Naive thymus-derived CD4-positive, alpha-beta T cell (primary cell): ENCODE measurements at regions of chr15 and their contacts with region 1.

Region 1: DNA sequence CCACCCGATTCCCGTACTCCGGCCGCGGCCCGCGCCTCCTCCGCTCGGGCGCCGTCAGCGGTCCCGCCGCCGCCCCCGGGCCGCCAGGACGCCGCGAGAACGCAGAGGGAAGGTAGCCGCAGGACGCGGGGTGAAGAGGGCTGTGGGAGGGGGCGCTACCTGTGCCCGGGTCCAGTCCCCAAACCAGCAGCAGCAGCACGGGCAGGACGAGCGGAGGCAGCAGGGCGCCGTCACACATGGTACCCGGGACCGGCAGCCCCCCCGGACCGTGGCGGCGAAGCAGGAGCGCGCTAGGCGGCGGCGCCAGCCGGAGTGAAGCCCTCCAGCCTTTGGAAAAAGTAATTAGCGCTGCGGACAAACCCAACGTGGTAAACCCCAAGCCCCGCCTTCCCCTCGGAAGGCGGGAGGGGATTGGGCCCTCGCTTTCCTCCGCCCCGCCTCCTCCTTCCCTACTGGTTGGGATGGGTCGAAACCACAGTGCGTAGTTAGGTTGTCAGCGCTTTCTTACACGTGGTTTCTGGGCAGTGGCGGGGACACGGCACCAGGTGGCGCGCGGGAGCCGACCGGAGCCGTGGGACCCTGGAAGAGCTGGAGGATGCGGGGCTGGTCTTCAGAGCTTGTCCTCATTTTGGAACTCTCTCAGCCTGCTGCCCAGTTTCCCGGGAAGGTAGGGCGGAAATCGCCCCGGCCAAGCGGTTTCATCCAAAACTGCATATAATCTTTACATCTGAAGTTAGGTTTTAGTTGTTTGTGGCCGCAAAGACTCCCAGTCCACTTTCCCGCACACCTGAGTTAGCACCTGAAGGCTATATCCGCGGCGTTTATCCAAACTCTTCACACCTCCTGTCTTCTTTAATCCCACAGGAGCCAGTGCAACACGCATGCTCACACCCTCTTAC is at the start of gene ADAMTS17:
- DNase-seq: peak; percentile 80 to 96 (median 94)
- ATAC-seq: peak; percentile 98
- H3K4me3 ChIP-seq: peak within 1 kb of the TSS; percentile 69
- H3K4me3 Mint-ChIP-seq: peak within 1 kb of the TSS; percentile 59 to 88 (median 76)
- H3K27ac ChIP-seq: peak within 1 kb of the TSS; percentile 76
- H3K27ac Mint-ChIP-seq: peak within 1 kb of the TSS in 6 of 9 donors; percentile 6 to 76 (median 29)
- H3K4me1 ChIP-seq: peaks cover 4 to 6% of the 10 kb centered on the region in 2 donors
- H3K4me1 Mint-ChIP-seq: peaks cover 7 to 36% (median 28%) of the 10 kb centered on the region in 7 donors
- H3K27me3 ChIP-seq: no peaks in the 10 kb centered on the region
- H3K27me3 Mint-ChIP-seq: peaks cover 0 to 57% (median 4%) of the 10 kb centered on the region in 5 donors
- total RNA-seq, gene ADAMTS17: 2.0 to 13.5 (median 3.2) TPM

Region 2: DNA sequence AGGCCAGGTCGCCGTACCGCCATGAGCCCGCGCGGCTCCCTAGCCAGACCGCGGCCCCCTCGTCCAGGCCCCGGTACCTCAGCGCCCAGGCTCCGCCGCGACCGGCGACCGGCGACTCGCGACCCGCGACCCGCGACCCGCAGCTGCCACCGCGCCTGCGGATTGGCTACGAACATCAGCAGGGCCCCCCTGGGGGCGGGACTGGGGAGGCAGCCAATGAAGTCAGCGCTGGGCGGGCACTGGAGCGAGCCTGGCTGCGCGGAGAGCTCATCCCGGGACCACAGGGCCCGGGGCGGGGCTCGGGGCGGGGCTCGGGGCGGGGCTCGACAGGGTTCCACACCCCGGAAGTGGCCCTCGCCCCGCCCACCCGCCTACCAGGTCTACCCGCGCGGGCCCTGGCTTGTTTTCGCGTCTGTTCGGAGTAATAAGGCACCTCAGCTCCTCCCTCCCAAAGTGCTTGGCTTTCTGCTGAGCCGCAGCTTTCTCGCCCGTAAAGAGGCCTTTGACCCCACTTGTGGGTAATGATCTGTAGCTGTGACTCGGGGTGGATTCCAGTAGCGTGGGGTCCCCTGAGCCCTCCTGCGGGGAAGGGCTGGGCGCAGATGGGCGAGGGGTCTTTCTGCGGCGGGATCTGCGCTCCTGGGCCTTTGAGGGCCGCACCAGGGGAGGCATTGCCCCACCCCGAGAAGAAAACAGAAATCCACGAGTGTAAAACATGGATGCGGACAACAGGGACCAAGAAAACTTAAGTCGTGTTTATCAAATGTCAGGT is 608.5 kb before region 1 on chr15 and contains the start of gene LYSMD4:
- CTCF ChIA-PET with region 1: no interaction called
- POLR2A ChIA-PET with region 1: no interaction called
- intact Hi-C with region 1: loop called in 1 of 2 experiments (anchors 2 kb)
- DNase-seq: peak; percentile 93 to 98 (median 96)
- ATAC-seq: peak; percentile 100
- H3K4me3 ChIP-seq: peak within 1 kb of the TSS; percentile 70
- H3K4me3 Mint-ChIP-seq: peak within 1 kb of the TSS; percentile 81 to 92 (median 88)
- H3K27ac ChIP-seq: peak within 1 kb of the TSS; percentile 84
- H3K27ac Mint-ChIP-seq: peak within 1 kb of the TSS; percentile 82 to 97 (median 95)
- H3K4me1 ChIP-seq: peaks cover 10 to 13% of the 10 kb centered on the region in 2 donors
- H3K4me1 Mint-ChIP-seq: peaks cover 5 to 36% (median 27%) of the 10 kb centered on the region in 7 donors
- H3K27me3 ChIP-seq: no peaks in the 10 kb centered on the region
- H3K27me3 Mint-ChIP-seq: no peaks in the 10 kb centered on the region
- total RNA-seq, gene LYSMD4: 7.9 to 22.4 (median 15.4) TPM

Region 3: GRCh38 chr15:100111103-100112060 is 230.5 kb before region 1 on chr15:
- CTCF ChIA-PET with region 1: interaction called, 4 read pairs
- POLR2A ChIA-PET with region 1: no interaction called
- intact Hi-C with region 1: loop called (anchors 2 to 5 kb)
- DNase-seq: peak in 5 of 9 donors; percentile 7 to 30 (median 13)
- ATAC-seq: peak; percentile 51
- H3K4me3 ChIP-seq: no peak overlapping the region
- H3K4me3 Mint-ChIP-seq: peak overlapping the region; percentile 54 to 81 (median 65)
- H3K27ac ChIP-seq: peak overlapping the region; percentile 18
- H3K27ac Mint-ChIP-seq: peak overlapping the region in 8 of 9 donors; percentile 26 to 91 (median 57)
- H3K4me1 ChIP-seq: peaks cover 6 to 18% of the 10 kb centered on the region in 2 donors
- H3K4me1 Mint-ChIP-seq: peaks cover 17 to 65% (median 51%) of the 10 kb centered on the region in 7 donors
- H3K27me3 ChIP-seq: no peaks in the 10 kb centered on the region
- H3K27me3 Mint-ChIP-seq: no peaks in the 10 kb centered on the region

Region 4: GRCh38 chr15:100383302-100384107 is 41.6 kb after region 1 on chr15:
- CTCF ChIA-PET with region 1: interaction called, 3 read pairs
- POLR2A ChIA-PET with region 1: no interaction called
- intact Hi-C with region 1: loop called in 1 of 2 experiments (anchors 5 kb)
- DNase-seq: peak in 6 of 9 donors; percentile 12 to 35 (median 27)
- ATAC-seq: no peak
- H3K4me3 ChIP-seq: no peak overlapping the region
- H3K4me3 Mint-ChIP-seq: no peak overlapping the region
- H3K27ac ChIP-seq: no peak overlapping the region
- H3K27ac Mint-ChIP-seq: no peak overlapping the region
- H3K4me1 ChIP-seq: no peaks in the 10 kb centered on the region
- H3K4me1 Mint-ChIP-seq: peaks cover 0 to 7% (median 0%) of the 10 kb centered on the region in 7 donors
- H3K27me3 ChIP-seq: no peaks in the 10 kb centered on the region
- H3K27me3 Mint-ChIP-seq: peaks cover 0 to 14% (median 0%) of the 10 kb centered on the region in 5 donors

Region 5: DNA sequence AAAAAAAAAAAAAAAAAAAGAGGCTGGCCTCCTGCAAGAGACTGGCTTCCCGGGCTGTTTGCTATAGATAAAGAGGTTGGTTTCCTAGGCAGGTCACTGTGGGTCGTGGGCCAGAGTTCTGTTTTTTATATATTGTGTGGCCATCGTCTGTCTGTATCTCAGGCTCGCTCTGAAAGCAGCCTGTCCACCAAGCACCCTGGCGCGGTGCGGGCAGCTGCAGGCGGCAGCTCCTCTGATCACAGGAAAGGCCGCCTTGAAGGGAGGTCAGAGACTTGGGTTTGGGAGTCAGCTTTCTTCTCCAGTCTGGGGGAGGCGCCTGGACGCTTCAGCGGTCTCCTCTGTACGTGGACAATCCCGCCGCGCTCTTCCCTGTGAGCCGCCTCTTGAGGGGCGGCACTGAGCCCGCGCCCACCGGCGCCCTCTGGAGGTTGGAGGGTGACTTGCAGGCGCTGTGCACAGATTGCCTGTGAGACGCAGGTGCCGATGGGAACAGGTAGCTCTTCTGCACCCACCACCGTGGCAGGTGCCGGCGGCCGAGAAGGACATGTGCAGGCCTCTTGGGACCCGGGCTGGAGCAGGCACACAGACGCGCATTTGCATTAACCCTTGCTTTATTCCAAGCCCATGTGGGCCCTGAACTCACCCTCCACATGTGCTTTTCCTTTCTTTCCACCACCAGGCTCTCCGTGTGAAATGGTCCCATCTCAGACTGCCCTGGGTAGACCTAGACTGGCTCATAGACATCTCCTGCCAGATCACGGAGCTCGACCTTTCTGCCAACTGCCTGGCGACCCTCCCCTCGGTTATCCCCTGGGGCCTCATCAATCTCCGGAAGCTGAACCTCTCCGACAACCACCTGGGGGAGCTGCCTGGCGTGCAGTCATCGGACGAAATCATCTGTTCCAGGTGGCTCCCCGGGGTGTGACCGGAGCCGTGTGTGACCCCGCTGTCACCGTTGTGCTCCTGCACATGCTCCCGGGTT is 666.5 kb after region 1 on chr15:
- CTCF ChIA-PET with region 1: interaction called, 6 read pairs
- POLR2A ChIA-PET with region 1: no interaction called
- intact Hi-C with region 1: loop called in 1 of 2 experiments (anchors 1 kb)
- DNase-seq: peak; percentile 67 to 92 (median 85)
- ATAC-seq: peak; percentile 97
- H3K4me3 ChIP-seq: peak overlapping the region; percentile 77
- H3K4me3 Mint-ChIP-seq: peak overlapping the region; percentile 84 to 96 (median 90)
- H3K27ac ChIP-seq: no peak overlapping the region
- H3K27ac Mint-ChIP-seq: peak overlapping the region in 3 of 9 donors; percentile 63 to 75 (median 68)
- H3K4me1 ChIP-seq: peaks cover 8 to 9% of the 10 kb centered on the region in 2 donors
- H3K4me1 Mint-ChIP-seq: peaks cover 9 to 25% (median 23%) of the 10 kb centered on the region in 7 donors
- H3K27me3 ChIP-seq: no peaks in the 10 kb centered on the region
- H3K27me3 Mint-ChIP-seq: peaks cover 0 to 29% (median 0%) of the 10 kb centered on the region in 5 donors